Sciatic nerve (tissue), 2 donors: ENCODE measurements at regions of chr1 and their contacts with region 1.

Region 1: GRCh38 chr1:223062177-223062576 is 80.9 kb downstream of the TLR5 start:
- DNase-seq: no peak
- ATAC-seq: no peak

Region 2: DNA sequence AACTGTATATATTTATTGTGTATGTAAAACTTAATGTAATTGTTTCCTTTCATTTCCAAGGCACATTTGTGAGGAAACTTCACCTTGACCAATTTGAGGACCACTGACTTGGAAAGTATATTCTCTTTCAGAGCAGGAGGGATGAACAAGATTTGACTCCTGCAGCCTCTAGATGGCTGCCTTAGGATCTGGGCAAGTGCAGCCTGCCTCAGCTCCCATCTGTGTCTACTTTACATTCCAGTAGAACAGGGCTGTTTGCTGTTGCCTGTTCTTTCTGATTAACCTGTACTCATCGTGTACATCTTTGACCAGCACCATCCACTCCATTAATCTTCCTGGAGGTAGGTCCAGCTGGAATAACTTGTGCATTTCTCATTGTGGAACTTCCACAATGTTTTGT is 1870.1 kb before region 1 on chr1:
- intact Hi-C with region 1: loop called (anchors 10 kb)
- DNase-seq: no peak
- ATAC-seq: no peak